CD14-positive monocyte (primary cell): ENCODE measurements at regions of chr15 and their contacts with region 1.

Region 1: GRCh38 chr15:101294731-101295606 is at the start of gene SNRPA1:
- DNase-seq: peak; percentile 92 to 94 (median 94)
- H3K4me3 ChIP-seq: peak within 1 kb of the TSS; percentile 88 to 97 (median 93)
- H3K4me3 Mint-ChIP-seq: peak within 1 kb of the TSS; percentile 94 to 98
- H3K27ac ChIP-seq: peak within 1 kb of the TSS; percentile 94 to 97
- H3K27ac Mint-ChIP-seq: peak within 1 kb of the TSS; percentile 88 to 98 (median 97)
- H3K4me1 ChIP-seq: peaks cover 22 to 26% of the 10 kb centered on the region in 2 donors
- H3K4me1 Mint-ChIP-seq: peaks cover 26% of the 10 kb centered on the region
- H3K27me3 ChIP-seq: no peaks in the 10 kb centered on the region
- H3K27me3 Mint-ChIP-seq: no peaks in the 10 kb centered on the region
- CTCF ChIP-seq: no peak
- polyA plus RNA-seq, gene SNRPA1: 23.8 to 65.5 (median 35.4) TPM

Region 2: GRCh38 chr15:101445562-101446517 is 150.9 kb after region 1 on chr15:
- intact Hi-C with region 1: loop called in 1 of 2 experiments (anchors 5 kb)
- DNase-seq: peak; percentile 72 to 90 (median 89)
- H3K4me3 ChIP-seq: no peak overlapping the region
- H3K4me3 Mint-ChIP-seq: peak overlapping the region in 1 of 2 donors; percentile 69
- H3K27ac ChIP-seq: peak overlapping the region; percentile 43 to 72
- H3K27ac Mint-ChIP-seq: peak overlapping the region; percentile 76 to 96 (median 92)
- H3K4me1 ChIP-seq: peaks cover 24 to 29% of the 10 kb centered on the region in 2 donors
- H3K4me1 Mint-ChIP-seq: peaks cover 49% of the 10 kb centered on the region
- H3K27me3 ChIP-seq: no peaks in the 10 kb centered on the region
- H3K27me3 Mint-ChIP-seq: peaks cover 5 to 16% (median 9%) of the 10 kb centered on the region in 3 donors
- CTCF ChIP-seq: no peak

Region 3: GRCh38 chr15:101641166-101641764 is 346.3 kb after region 1 on chr15:
- intact Hi-C with region 1: loop called in 1 of 2 experiments (anchors 1 kb)
- DNase-seq: peak; percentile 86 to 88 (median 87)
- H3K4me3 ChIP-seq: peak overlapping the region in 2 of 3 experiments; percentile 25 to 60
- H3K4me3 Mint-ChIP-seq: peak overlapping the region; percentile 51 to 78
- H3K27ac ChIP-seq: peak overlapping the region; percentile 7 to 94
- H3K27ac Mint-ChIP-seq: peak overlapping the region; percentile 99 to 100 (median 99)
- H3K4me1 ChIP-seq: peaks cover 21 to 29% of the 10 kb centered on the region in 2 donors
- H3K4me1 Mint-ChIP-seq: peaks cover 27% of the 10 kb centered on the region
- H3K27me3 ChIP-seq: no peaks in the 10 kb centered on the region
- H3K27me3 Mint-ChIP-seq: no peaks in the 10 kb centered on the region
- CTCF ChIP-seq: peak; percentile 94

Region 4: GRCh38 chr15:101723874-101724674 is 429.1 kb after region 1 on chr15 and contains the start of gene TARS3:
- intact Hi-C with region 1: loop called in 1 of 2 experiments (anchors 5 kb)
- DNase-seq: peak; percentile 89 to 93 (median 90)
- H3K4me3 ChIP-seq: peak within 1 kb of the TSS; percentile 42 to 81 (median 75)
- H3K4me3 Mint-ChIP-seq: peak within 1 kb of the TSS; percentile 74 to 94
- H3K27ac ChIP-seq: peak within 1 kb of the TSS; percentile 42 to 80
- H3K27ac Mint-ChIP-seq: peak within 1 kb of the TSS in 5 of 7 donors; percentile 11 to 90 (median 64)
- H3K4me1 ChIP-seq: peaks cover 13 to 14% of the 10 kb centered on the region in 2 donors
- H3K4me1 Mint-ChIP-seq: peaks cover 15% of the 10 kb centered on the region
- H3K27me3 ChIP-seq: peaks cover 0 to 2% of the 10 kb centered on the region in 2 donors
- H3K27me3 Mint-ChIP-seq: peaks cover 0 to 3% (median 2%) of the 10 kb centered on the region in 3 donors
- CTCF ChIP-seq: no peak
- polyA plus RNA-seq, gene TARS3: 1.3 to 2.4 (median 1.8) TPM